Esophagus squamous epithelium (tissue), 5 donors: ENCODE measurements at regions of chr9 and their contacts with region 1.

Region 1: DNA sequence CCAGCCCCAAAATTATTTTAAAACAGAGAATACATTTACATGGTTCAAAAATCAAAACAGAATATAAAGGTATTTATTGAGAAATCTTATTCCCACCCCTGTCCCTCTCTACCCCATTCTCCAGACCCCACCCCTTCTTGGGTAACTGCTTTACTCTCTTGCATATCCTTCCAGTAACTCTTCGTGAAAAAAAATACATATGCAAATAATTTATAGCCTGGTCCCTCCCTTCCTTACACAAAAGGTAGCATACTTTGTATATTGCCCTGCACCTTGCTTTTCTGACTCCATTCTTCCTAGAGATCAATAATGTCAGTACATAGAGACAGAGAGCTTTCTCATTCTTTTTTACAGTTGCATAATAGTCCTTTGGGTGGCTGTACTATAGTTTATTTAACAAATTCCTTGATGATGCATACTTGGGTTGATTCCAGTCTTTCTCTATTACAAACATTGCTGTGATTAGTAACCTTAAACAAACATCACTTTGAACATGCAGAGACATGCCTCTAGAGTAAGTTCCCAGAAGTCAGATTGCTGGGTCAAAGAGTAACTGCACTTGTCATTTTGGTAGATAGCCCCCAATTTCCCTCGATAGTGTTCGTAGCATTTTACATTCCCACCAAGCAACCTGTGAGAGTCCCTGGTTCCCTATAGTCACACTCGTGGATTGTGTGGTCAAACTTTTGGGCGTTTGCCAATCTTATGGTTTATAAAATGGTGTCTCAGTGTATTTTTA is 47.8 kb downstream of the STOM start:
- DNase-seq: no peak
- H3K4me3 ChIP-seq: no peak overlapping the region
- H3K27ac ChIP-seq: peak overlapping the region; percentile 79 to 98 (median 94)
- H3K4me1 ChIP-seq: peaks cover 12 to 99% (median 67%) of the 10 kb centered on the region in 3 donors
- H3K27me3 ChIP-seq: no peaks in the 10 kb centered on the region
- CTCF ChIP-seq: peak in 1 of 6 experiments; percentile 5
- POLR2A ChIP-seq: no peak

Region 2: GRCh38 chr9:120524863-120525262 is 797.3 kb before region 1 on chr9:
- intact Hi-C with region 1: no loop called
- DNase-seq: no peak
- H3K4me3 ChIP-seq: no peak overlapping the region
- H3K27ac ChIP-seq: no peak overlapping the region
- H3K4me1 ChIP-seq: no peaks in the 10 kb centered on the region
- H3K27me3 ChIP-seq: no peaks in the 10 kb centered on the region
- CTCF ChIP-seq: no peak
- POLR2A ChIP-seq: no peak

Region 3: DNA sequence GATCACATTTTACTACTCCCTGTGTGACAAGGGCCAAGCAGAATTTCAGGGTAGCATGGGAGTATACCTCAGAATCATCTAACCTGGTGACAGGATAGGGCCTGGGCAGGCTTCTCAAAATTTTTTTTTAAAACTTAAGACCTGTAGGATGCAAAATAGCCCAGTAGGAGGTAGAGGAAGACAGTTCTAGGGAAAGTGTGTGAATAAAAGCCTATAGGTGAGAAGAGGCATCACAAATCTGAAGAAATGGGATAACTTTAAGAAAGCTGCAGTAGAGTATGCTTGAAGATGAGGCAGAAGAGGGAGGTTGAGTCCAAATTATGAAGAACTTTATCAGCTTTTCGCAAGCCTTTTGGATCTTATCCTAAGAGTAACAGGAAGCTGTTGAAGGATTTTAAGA is 215.2 kb before region 1 on chr9:
- intact Hi-C with region 1: no loop called
- DNase-seq: no peak
- H3K4me3 ChIP-seq: no peak overlapping the region
- H3K27ac ChIP-seq: no peak overlapping the region
- H3K4me1 ChIP-seq: no peaks in the 10 kb centered on the region
- H3K27me3 ChIP-seq: no peaks in the 10 kb centered on the region
- CTCF ChIP-seq: peak in 4 of 6 experiments; percentile 12 to 50 (median 22)
- POLR2A ChIP-seq: no peak

Region 4: GRCh38 chr9:121376214-121376830 is 54.1 kb after region 1 on chr9:
- intact Hi-C with region 1: loop called (anchors 5 kb)
- DNase-seq: no peak
- H3K4me3 ChIP-seq: no peak overlapping the region
- H3K27ac ChIP-seq: no peak overlapping the region
- H3K4me1 ChIP-seq: peaks cover 14 to 46% (median 26%) of the 10 kb centered on the region in 3 donors
- H3K27me3 ChIP-seq: no peaks in the 10 kb centered on the region
- CTCF ChIP-seq: peak in 4 of 6 experiments; percentile 16 to 47 (median 42)
- POLR2A ChIP-seq: no peak

Region 5: GRCh38 chr9:121399883-121400607 is 77.8 kb after region 1 on chr9:
- intact Hi-C with region 1: loop called (anchors 2 kb)
- DNase-seq: no peak
- H3K4me3 ChIP-seq: no peak overlapping the region
- H3K27ac ChIP-seq: peak overlapping the region in 3 of 4 donors; percentile 67 to 85 (median 79)
- H3K4me1 ChIP-seq: peaks cover 0 to 29% (median 0%) of the 10 kb centered on the region in 3 donors
- H3K27me3 ChIP-seq: no peaks in the 10 kb centered on the region
- CTCF ChIP-seq: peak; percentile 57 to 82 (median 80)
- POLR2A ChIP-seq: no peak

Region 6: DNA sequence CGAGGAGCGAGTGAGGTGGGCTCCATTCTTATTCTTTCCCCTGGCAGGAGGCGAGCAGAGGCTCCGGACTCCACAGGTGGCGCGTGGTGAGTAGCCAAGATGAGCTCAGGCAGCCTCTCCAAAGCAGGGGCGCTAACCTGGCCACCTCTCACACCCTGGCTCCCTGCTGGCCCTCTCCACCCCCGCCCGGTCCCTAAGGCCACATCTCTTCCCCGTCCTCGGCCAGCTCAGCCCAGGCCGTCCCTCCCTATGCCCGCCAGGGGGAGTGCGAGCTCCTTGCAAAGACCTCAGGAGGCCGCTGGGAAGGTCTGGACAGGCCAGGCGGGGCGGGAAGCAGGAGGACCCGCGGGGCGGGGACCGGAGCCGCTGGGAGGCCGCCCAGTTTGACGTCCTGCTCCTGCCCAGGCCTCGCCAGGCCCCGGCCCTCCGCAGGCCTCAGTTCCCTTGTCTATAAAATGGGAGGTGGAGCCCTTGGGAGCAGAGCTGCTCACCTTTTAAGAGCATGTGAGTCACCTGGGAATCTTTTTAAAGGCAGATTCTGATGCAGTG is 223.7 kb after region 1 on chr9:
- intact Hi-C with region 1: no loop called
- DNase-seq: peak; percentile 49
- H3K4me3 ChIP-seq: peak overlapping the region in 3 of 4 donors; percentile 4 to 50 (median 30)
- H3K27ac ChIP-seq: peak overlapping the region in 2 of 4 donors; percentile 27 to 50
- H3K4me1 ChIP-seq: peaks cover 7 to 27% (median 16%) of the 10 kb centered on the region in 3 donors
- H3K27me3 ChIP-seq: no peaks in the 10 kb centered on the region
- CTCF ChIP-seq: peak; percentile 43 to 98 (median 95)
- POLR2A ChIP-seq: no peak